BJ (cell line): ENCODE measurements at regions of chr1 and their contacts with region 1.

Region 1: DNA sequence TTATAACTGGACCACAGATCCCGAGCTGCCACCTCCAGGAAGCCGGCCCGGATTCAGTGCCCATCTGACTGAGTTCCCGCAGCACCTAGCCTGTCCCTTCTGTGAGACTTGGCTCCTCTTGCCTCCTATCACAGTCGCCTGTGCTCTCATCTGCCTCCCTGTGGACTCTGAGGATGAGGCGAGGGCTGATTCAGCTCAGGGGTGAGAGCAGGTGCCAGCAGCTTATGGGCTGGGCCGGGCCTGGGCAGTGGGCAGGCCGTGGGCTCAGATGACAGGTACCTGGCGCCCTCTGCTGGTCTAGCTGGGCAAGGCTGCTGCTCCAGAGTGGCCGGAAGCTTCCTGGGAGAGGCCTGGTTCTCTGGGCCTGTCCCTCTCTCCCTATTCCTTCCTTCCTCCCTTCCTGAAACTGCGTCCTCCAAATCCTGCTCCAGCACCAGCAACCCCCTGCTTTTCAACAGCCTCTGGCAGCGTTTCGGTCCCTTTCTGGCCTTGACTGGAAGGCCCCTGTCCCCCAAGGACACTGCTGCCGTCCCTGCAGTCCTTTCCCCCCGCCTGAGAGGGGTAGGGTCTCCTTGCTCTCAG is 17.3 kb upstream of the PCSK9 start:
- DNase-seq: peak; percentile 40
- H3K4me3 ChIP-seq: no peak overlapping the region
- H3K27me3 ChIP-seq: peaks cover 4% of the 10 kb centered on the region
- CTCF ChIP-seq: peak; percentile 97

Region 2: GRCh38 chr1:54973205-54973921 is 48.7 kb before region 1 on chr1:
- CTCF ChIA-PET with region 1: interaction called, 14 read pairs
- POLR2A ChIA-PET with region 1: no interaction called
- DNase-seq: no peak
- H3K4me3 ChIP-seq: no peak overlapping the region
- H3K27me3 ChIP-seq: no peaks in the 10 kb centered on the region
- CTCF ChIP-seq: peak; percentile 62

Region 3: DNA sequence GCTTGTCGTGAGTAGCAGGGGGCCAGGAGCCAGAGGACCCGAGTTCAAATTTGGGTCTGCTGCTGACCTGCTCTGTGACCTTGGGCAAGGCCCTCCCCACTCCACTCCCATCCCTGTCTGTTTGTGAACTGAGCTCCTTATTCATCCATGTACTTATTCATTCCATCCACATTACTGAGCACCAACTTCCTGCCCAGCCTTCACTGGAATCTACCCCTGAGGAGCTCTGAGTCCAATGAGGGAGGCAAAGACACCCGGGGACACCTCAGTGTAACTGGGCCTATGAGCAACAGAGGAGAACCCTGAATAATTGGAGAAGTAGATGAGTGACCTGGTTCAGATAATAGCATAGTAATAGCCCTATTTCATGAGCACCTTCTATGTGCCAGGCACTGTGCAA is 14.4 kb before region 1 on chr1:
- CTCF ChIA-PET with region 1: interaction called, 30 read pairs
- POLR2A ChIA-PET with region 1: no interaction called
- DNase-seq: peak; percentile 42
- H3K4me3 ChIP-seq: no peak overlapping the region
- H3K27me3 ChIP-seq: no peaks in the 10 kb centered on the region; the same call in 1 of the 2 replicates
- CTCF ChIP-seq: no peak

Region 4: DNA sequence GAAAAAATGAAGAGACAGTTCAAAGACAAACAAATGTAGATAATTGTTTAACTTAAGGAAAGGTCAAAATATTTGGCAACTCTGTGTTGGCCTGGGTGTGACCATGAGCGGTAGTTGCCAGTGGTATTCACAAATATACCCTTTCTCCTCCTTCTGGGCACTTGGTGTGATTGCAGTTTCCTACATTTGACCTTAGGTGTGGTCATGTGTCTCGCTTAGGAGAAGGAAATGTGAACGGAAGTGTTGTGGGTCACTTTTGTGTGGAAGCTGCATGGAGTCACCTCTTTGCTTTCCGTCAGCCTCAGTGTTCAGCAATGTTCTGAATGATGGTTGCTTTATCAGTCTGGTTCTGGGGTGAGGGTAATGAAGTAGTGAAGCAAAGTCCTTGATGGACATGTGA is 13.8 kb after region 1 on chr1:
- CTCF ChIA-PET with region 1: interaction called, 35 read pairs
- POLR2A ChIA-PET with region 1: no interaction called
- DNase-seq: no peak
- H3K4me3 ChIP-seq: no peak overlapping the region
- H3K27me3 ChIP-seq: peaks cover 44% of the 10 kb centered on the region
- CTCF ChIP-seq: no peak

Region 5: GRCh38 chr1:55215256-55216021 is 193.4 kb after region 1 on chr1 and contains the start of gene USP24:
- CTCF ChIA-PET with region 1: no interaction called
- POLR2A ChIA-PET with region 1: no interaction called
- DNase-seq: no peak
- H3K4me3 ChIP-seq: peak within 1 kb of the TSS; percentile 81
- H3K27me3 ChIP-seq: no peaks in the 10 kb centered on the region
- CTCF ChIP-seq: no peak
- polyA plus RNA-seq, gene USP24: 8.4 and 14.1 TPM in 2 replicates